ENCODE measurements at regions of chr9 and their contacts with region 1.

Region 1: GRCh38 chr9:114930056-114930812 is at the start of gene TNFSF8:
- DNase-seq: no peak
- H3K4me3 Mint-ChIP-seq: no peak within 1 kb of the TSS
- H3K27ac Mint-ChIP-seq: no peak within 1 kb of the TSS
- H3K4me1 Mint-ChIP-seq: no peaks in the 10 kb centered on the region
- H3K27me3 Mint-ChIP-seq: peaks cover 80% of the 10 kb centered on the region
- CTCF ChIP-seq: no peak
- total RNA-seq, gene TNFSF8: not detected in 2 replicates

Region 2: GRCh38 chr9:114953917-114954316 is 23.7 kb after region 1 on chr9:
- CTCF ChIA-PET with region 1: no interaction called
- intact Hi-C with region 1: loop called (anchors 2 kb)
- DNase-seq: no peak
- H3K4me3 Mint-ChIP-seq: no peak overlapping the region
- H3K27ac Mint-ChIP-seq: no peak overlapping the region
- H3K4me1 Mint-ChIP-seq: no peaks in the 10 kb centered on the region
- H3K27me3 Mint-ChIP-seq: peaks cover 58% of the 10 kb centered on the region
- CTCF ChIP-seq: no peak

Region 3: GRCh38 chr9:114988962-114989599 is 58.8 kb after region 1 on chr9:
- CTCF ChIA-PET with region 1: no interaction called
- intact Hi-C with region 1: loop called (anchors 10 kb)
- DNase-seq: no peak
- H3K4me3 Mint-ChIP-seq: no peak overlapping the region
- H3K27ac Mint-ChIP-seq: no peak overlapping the region
- H3K4me1 Mint-ChIP-seq: no peaks in the 10 kb centered on the region
- H3K27me3 Mint-ChIP-seq: peaks cover 73% of the 10 kb centered on the region
- CTCF ChIP-seq: no peak

Region 4: DNA sequence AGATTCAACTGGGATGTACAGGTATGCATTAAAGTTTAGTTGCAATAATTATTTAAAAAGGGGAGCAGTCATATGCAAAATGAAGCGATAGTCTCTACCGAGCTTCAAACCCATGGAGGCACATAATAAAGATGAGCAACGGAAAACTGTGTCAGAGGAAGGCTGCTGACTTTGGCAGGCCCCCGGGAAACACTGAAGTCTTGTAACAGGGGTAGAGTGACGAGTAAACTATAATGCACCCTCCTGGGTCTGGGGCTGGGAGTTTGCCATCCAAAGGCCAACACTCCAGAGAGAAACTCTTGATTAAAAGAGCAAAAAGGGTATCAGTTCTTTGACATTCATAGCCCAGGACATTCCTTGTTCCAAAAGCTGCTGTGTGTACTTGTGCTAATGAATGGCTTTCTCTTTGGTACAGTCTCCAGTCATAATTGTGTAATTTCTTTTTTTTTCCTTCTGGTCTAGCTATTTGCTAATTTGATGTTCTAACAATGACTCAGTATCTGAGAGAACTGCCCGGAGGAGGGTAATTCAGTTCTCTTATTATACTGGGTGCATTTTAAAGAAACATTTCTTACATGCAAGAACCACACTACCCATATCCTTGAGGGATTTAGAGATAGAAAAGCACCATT is 128.6 kb after region 1 on chr9:
- CTCF ChIA-PET with region 1: no interaction called
- intact Hi-C with region 1: no loop called
- DNase-seq: no peak
- H3K4me3 Mint-ChIP-seq: no peak overlapping the region
- H3K27ac Mint-ChIP-seq: no peak overlapping the region
- H3K4me1 Mint-ChIP-seq: no peaks in the 10 kb centered on the region
- H3K27me3 Mint-ChIP-seq: peaks cover 37% of the 10 kb centered on the region
- CTCF ChIP-seq: no peak

Region 5: DNA sequence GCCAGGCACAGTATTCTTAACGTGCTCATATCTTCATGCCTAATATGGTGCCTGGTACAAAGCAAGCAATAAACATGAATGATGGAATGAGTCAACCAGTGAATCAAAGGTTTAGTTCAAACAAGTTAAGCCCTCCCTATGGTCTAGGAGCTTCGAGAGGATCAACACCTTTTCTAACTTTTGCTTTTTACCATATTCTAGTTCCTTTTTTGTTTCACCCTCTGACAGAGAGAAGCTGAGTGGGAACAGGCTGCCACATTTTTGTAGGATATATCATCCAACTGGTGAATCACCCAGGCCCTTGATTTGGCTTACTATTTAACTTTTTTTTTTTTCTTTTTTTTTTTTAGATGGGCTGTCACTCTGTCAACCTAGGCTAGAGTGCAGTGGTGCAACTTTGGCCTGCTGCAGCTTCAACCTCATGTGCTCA is 227.0 kb after region 1 on chr9:
- CTCF ChIA-PET with region 1: no interaction called
- intact Hi-C with region 1: no loop called
- DNase-seq: peak; percentile 5
- H3K4me3 Mint-ChIP-seq: no peak overlapping the region
- H3K27ac Mint-ChIP-seq: peak overlapping the region; percentile 58
- H3K4me1 Mint-ChIP-seq: peaks cover 14% of the 10 kb centered on the region
- H3K27me3 Mint-ChIP-seq: no peaks in the 10 kb centered on the region
- CTCF ChIP-seq: no peak

Measured in Calu3 (cell line).